ENCODE measurements at regions of chr19 and their contacts with region 1.

Region 1: GRCh38 chr19:32339988-32340874 is 5.2 kb upstream of the ZNF507 start:
- DNase-seq: peak; percentile 68
- ATAC-seq: peak; percentile 55 to 91 (median 84)
- H3K4me3 ChIP-seq: no peak overlapping the region
- H3K27ac ChIP-seq: no peak overlapping the region
- H3K4me1 ChIP-seq: peaks cover 0 to 9% (median 0%) of the 10 kb centered on the region in 9 donors
- H3K27me3 ChIP-seq: peaks cover 0 to 95% (median 0%) of the 10 kb centered on the region in 7 donors
- CTCF ChIP-seq: peak; percentile 40 to 79 (median 71)

Region 2: GRCh38 chr19:32287811-32288227 is 52.4 kb before region 1 on chr19:
- intact Hi-C with region 1: no loop called
- DNase-seq: peak; percentile 58 to 74
- ATAC-seq: peak; percentile 53 to 92 (median 84)
- H3K4me3 ChIP-seq: no peak overlapping the region
- H3K27ac ChIP-seq: peak overlapping the region in 3 of 10 donors; percentile 28 to 65 (median 33)
- H3K4me1 ChIP-seq: peaks cover 0 to 14% (median 0%) of the 10 kb centered on the region in 9 donors
- H3K27me3 ChIP-seq: peaks cover 0 to 48% (median 20%) of the 10 kb centered on the region in 7 donors
- CTCF ChIP-seq: peak in 7 of 9 donors; percentile 33 to 65 (median 55)

Region 3: GRCh38 chr19:32405431-32406161 is 65.4 kb after region 1 on chr19 and contains the start of gene DPY19L3:
- intact Hi-C with region 1: loop called in 5 of 10 experiments (anchors 5 to 10 kb)
- DNase-seq: peak; percentile 94 to 95
- ATAC-seq: peak; percentile 98 to 100 (median 99)
- H3K4me3 ChIP-seq: peak within 1 kb of the TSS; percentile 64 to 98 (median 80)
- H3K27ac ChIP-seq: peak within 1 kb of the TSS; percentile 86 to 99 (median 96)
- H3K4me1 ChIP-seq: peaks cover 0 to 25% (median 15%) of the 10 kb centered on the region in 9 donors
- H3K27me3 ChIP-seq: peaks cover 0 to 14% (median 0%) of the 10 kb centered on the region in 7 donors
- CTCF ChIP-seq: no peak
- total RNA-seq, gene DPY19L3: 3.2 to 11.8 (median 4.7) TPM

Measured in heart right ventricle (tissue), 16 donors.